PC-9 (cell line): ENCODE measurements at regions of chr19 and their contacts with region 1.

Region 1: DNA sequence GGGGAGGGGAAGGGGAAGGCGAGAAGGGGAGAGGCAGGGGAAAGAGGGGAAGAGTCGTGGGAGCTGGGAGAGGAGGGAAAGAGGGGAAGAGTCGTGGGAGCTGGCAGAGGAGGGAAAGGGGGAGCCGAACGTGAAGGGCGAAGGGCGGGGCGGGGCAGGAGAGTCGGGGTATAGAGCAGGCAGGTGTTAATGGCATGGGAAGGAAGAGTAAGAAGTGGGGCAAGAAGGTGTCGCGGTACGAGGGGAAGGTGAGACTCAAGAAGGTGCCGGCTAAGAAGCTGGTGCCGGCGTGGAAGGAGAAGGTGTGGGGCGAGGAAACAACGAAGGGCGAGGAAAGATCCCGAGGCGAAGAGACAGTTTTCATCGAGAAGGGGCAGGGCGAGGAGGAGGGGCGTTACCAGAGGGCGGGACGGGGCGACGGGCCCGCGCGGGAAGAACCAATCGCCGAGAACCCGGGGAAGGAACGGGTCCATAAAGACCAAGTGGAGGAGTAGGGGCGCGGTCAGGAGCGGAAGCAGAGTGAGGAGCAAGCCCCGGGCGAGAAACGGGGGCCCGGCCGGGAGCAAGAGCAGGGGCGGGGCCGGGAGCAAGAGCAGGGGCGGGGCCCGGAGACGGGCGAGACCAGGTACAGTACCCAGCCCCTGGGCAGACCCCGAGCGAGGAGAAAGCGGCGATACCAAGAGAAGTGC is 463 bp downstream of the CATSPERG start:
- DNase-seq: peak; percentile 87 to 95
- H3K4me3 ChIP-seq: peak overlapping the region; percentile 73
- H3K27ac ChIP-seq: peak overlapping the region; percentile 69
- H3K4me1 ChIP-seq: peaks cover 5% of the 10 kb centered on the region
- H3K27me3 ChIP-seq: no peaks in the 10 kb centered on the region
- CTCF ChIP-seq: no peak

Region 2: GRCh38 chr19:38245826-38246498 is 90.1 kb before region 1 on chr19:
- CTCF ChIA-PET with region 1: interaction called, 6 read pairs
- POLR2A ChIA-PET with region 1: interaction called, 4 read pairs
- intact Hi-C with region 1: loop called (anchors 1 kb)
- DNase-seq: no peak
- H3K4me3 ChIP-seq: no peak overlapping the region
- H3K27ac ChIP-seq: no peak overlapping the region
- H3K4me1 ChIP-seq: peaks cover 7% of the 10 kb centered on the region
- H3K27me3 ChIP-seq: no peaks in the 10 kb centered on the region
- CTCF ChIP-seq: no peak

Region 3: DNA sequence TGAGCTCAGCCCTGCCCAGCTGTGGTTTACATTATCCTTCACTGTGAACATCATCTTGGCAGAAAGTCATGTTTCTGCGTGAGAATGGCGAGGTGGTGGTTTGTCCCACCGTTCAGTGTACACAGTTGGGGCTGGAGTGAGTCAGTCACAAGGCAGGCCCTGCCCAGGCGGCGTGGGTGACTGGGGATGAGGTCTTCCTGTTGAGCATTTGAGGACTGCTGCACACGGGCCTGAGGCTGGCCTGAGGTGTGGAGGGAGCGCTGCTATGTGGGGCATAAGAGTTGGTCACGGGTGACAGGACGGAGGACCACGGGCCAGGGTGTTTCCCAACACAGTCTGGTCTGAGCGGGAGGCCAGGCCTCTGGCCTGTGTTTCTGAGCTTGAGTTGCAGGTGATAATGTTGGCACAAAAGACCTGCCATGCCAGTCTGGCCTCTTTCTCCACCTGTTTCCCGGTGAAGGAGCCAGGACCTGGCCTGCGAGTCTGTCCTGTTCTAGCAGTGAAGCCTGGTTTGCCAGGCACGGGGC is 45.4 kb before region 1 on chr19:
- CTCF ChIA-PET with region 1: no interaction called
- POLR2A ChIA-PET with region 1: no interaction called
- intact Hi-C with region 1: loop called (anchors 2 kb)
- DNase-seq: peak; percentile 90 to 91
- H3K4me3 ChIP-seq: no peak overlapping the region; the same call in 1 of the 2 replicates
- H3K27ac ChIP-seq: peak overlapping the region; percentile 75
- H3K4me1 ChIP-seq: peaks cover 44% of the 10 kb centered on the region
- H3K27me3 ChIP-seq: no peaks in the 10 kb centered on the region
- CTCF ChIP-seq: no peak

Region 4: DNA sequence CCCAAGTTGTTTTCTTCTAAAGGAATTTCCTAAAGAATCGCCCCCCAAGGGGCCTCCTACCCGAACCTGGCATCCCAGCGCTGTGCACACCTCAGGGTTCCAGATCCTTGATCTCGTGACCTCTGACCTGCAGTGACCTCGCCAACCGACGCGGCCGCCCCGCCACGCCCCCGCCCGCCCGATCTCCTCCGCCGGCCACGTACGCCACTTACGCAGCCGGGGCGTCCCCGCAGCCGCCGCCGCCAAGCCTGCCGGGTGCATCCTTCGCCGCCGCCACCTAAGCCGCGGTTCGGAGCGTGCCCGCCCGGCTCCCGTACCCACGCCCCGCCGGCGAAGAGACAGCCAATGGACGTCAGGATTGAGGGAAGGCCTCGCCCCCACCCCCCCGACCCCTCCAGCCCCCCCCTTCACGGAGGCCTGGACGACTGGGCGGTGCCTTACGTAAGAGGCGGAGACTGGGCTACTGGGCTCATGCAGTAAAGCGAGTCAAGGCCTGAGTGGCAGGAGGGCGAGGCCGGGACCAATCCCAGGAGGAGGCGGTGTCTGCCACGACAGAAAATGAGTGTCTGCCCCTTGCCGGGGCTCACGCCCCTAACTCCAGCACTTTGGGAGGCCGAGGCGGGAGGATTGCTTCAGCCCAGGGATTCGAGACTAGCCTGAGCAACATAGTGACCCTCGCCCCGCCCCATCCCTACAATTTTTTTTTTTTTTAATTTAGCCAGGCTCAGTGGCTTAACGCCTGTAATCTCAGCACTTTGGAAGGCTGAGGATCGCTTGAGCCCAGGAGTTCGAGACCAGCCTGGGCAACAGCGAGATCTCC is 20.2 kb before region 1 on chr19 and contains the start of gene YIF1B:
- CTCF ChIA-PET with region 1: no interaction called
- POLR2A ChIA-PET with region 1: no interaction called
- intact Hi-C with region 1: no loop called
- DNase-seq: peak; percentile 94 to 96
- H3K4me3 ChIP-seq: peak within 1 kb of the TSS; percentile 60
- H3K27ac ChIP-seq: peak within 1 kb of the TSS; percentile 67
- H3K4me1 ChIP-seq: peaks cover 21% of the 10 kb centered on the region; the same call in 1 of the 2 replicates
- H3K27me3 ChIP-seq: peaks cover 16% of the 10 kb centered on the region
- CTCF ChIP-seq: no peak
- total RNA-seq, gene YIF1B: 33.6 and 39.8 TPM in 2 replicates

Region 5: DNA sequence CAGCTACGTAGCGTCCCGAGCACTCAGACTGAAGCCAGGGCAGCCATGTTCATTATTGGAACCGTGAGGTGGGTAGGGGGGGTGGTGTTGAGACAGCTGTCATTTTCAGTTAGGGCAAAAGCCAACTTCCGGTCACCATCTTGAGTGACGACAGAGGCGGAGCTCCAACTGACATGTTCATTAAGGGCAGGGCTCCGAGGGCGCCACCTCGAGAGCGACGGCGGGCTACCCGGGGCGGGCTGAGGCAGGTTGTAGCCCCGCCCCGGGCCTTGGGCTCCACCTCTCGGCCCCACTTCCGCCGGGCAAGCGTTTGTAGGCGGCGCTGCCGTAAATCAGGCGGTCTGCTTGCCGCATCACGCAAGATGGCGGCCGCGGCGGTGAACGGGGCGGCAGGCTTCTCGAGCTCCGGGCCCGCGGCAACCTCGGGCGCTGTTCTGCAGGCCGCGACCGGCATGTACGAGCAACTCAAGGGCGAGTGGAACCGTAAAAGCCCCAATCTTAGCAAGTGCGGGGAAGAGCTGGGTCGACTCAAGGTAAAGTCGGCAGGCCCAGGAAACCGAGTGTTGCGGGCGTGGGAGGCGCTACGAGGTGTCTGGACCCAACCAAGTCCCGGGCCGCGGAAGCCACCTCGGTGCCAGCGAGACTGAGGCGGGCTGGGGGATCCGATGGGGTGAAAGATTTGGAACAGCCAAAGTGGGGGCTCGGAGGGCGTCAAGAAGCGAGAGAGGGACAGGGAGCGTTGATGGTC is 38.5 kb after region 1 on chr19 and contains the start of gene PSMD8:
- CTCF ChIA-PET with region 1: interaction called, 4 read pairs
- POLR2A ChIA-PET with region 1: interaction called, 5 read pairs
- intact Hi-C with region 1: loop called (anchors 1 kb)
- DNase-seq: peak; percentile 92 to 97
- H3K4me3 ChIP-seq: peak within 1 kb of the TSS; percentile 76
- H3K27ac ChIP-seq: peak within 1 kb of the TSS; percentile 58
- H3K4me1 ChIP-seq: peaks cover 15% of the 10 kb centered on the region
- H3K27me3 ChIP-seq: no peaks in the 10 kb centered on the region
- CTCF ChIP-seq: peak; percentile 35; the same call in 1 of the 2 replicates
- total RNA-seq, gene PSMD8: 141 and 222 TPM in 2 replicates

Region 6: DNA sequence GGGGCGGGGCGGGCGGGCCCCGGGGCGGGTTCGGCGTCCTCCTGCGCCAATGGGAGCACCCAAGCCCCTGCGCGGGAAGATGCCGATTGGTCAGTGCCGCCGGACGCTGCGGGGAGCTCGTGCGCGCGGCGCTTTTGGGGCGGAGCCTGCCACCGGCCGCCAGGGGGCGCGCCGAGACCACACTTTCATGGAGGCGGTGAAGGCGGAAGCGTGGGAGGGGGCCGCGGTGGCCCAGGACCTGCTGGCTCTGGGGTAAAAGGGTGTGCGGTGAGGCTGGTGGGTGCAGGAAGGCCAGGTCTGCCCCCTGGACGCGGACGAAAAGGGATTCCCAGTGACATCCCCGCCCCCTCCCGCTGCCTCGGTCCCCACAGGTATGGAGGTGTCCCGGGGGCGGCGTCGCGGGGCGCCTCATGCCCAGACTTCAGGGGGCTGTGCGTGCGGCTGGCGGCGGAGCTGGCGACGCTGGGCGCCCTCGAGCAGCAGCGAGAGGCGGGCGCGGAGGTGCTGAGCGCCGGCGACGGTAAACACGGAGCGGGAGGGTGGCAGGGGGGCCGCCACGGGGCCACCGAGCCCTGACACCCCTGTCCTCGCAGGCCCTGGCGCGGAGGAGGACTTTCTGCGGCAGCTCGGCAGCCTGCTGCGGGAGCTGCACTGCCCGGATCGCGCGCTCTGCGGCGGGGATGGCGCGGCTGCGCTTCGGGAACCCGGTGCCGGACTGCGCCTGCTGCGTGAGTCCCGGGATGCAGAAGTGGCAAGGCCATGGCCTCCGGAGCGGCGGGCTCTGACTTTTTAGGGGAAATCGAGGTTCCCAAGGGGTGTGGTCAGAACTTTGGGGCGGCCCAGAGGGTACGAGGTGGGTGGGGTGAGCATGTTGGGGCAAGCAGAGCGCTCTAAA is 67.1 kb after region 1 on chr19 and contains the start of gene FAM98C:
- CTCF ChIA-PET with region 1: interaction called, 3 read pairs
- POLR2A ChIA-PET with region 1: interaction called, 8 read pairs
- intact Hi-C with region 1: loop called (anchors 1 kb)
- DNase-seq: peak; percentile 90 to 97
- H3K4me3 ChIP-seq: peak within 1 kb of the TSS; percentile 94
- H3K27ac ChIP-seq: no peak within 1 kb of the TSS
- H3K4me1 ChIP-seq: peaks cover 8% of the 10 kb centered on the region; the same call in 1 of the 2 replicates
- H3K27me3 ChIP-seq: no peaks in the 10 kb centered on the region
- CTCF ChIP-seq: peak; percentile 94
- total RNA-seq, gene FAM98C: 15.8 and 19.5 TPM in 2 replicates